Aorta (tissue), 5 donors: ENCODE measurements at regions of chr6 and their contacts with region 1.

Region 1: GRCh38 chr6:121055572-121056163 is 278.6 kb downstream of the TBC1D32 start:
- DNase-seq: no peak
- ATAC-seq: peak; percentile 81
- H3K4me3 ChIP-seq: no peak overlapping the region
- H3K27ac ChIP-seq: no peak overlapping the region
- H3K4me1 ChIP-seq: no peaks in the 10 kb centered on the region
- H3K27me3 ChIP-seq: no peaks in the 10 kb centered on the region

Region 2: DNA sequence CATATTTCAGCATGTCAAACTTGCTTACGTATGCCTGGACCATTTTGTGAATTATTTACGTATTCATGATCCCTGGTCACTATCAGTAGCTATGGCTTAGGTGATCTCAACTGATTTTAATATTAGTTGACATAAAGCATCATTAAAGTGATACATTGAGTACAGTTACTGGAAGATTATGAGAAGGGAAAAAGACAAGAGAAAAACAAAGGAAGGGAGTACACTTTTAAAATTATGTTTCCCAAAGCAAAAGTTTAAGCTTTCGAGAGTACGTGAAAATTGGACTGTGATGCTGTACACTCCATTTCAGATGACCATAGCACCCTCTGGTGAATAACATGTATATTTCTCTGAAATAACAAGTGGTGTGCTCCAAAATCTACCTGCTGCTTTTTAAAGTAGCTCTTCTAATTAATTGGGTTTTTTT is 1128.7 kb after region 1 on chr6:
- intact Hi-C with region 1: loop called (anchors 10 kb)
- DNase-seq: no peak
- ATAC-seq: peak; percentile 65
- H3K4me3 ChIP-seq: peak overlapping the region; percentile 36 to 48
- H3K27ac ChIP-seq: no peak overlapping the region
- H3K4me1 ChIP-seq: no peaks in the 10 kb centered on the region
- H3K27me3 ChIP-seq: no peaks in the 10 kb centered on the region